Activated CD4-positive, alpha-beta memory T cell treated with anti-CD3 and anti-CD28 coated beads for 36 hours (primary cell): ENCODE measurements at regions of chr22 and their contacts with region 1.

Region 1: GRCh38 chr22:37443977-37444376 is 16.7 kb upstream of the ELFN2 start:
- DNase-seq: no peak
- H3K4me3 Mint-ChIP-seq: no peak overlapping the region
- H3K27ac Mint-ChIP-seq: peak overlapping the region; percentile 34
- H3K4me1 Mint-ChIP-seq: peaks cover 16% of the 10 kb centered on the region
- H3K27me3 Mint-ChIP-seq: peaks cover 2% of the 10 kb centered on the region

Region 2: DNA sequence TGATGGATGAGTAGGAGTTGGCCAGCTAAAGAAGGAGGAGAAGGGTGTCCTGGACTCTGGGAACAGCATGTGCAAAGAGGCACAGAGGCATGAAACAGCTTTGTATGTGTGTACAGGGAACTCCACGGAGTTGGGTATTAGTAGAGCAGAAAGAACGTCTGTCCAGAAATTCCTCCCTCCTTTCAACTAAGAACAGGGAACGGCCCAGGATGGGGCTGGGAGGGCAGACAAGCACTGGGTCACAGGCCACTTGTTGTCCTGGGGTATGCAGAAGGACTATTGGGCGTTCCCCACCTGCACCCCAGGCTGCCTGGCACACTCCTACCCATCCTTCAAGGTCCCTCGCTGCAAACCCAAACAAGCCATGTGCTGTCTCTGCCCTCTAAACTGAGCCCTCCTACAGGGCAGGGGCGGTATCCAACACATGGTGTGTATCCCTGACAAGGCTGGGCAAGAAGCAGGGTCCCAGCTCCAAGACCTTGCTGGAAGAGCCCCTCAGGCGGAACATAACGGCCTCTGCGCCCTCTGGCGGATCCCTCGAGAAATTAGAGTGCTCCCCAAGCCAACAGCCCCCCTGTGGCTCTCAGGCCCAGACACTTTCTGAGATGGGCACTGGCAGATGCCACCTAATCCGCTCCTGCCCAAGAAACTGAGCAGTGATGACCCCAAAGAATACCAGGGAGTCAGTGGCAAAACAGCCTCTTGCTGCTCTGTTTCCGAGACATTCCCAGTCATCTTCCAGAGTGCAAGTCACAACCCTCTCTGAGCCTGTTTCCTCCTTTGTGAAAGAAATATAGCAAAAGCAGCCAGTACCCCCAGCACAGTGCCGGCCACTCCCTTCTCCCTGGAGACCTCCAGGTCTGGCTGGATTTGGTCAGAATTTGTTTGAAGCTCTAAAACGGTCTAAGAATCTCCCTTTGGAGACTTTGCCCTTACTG is 15.1 kb before region 1 on chr22:
- CTCF ChIA-PET with region 1: interaction called, 6 read pairs
- POLR2A ChIA-PET with region 1: no interaction called
- intact Hi-C with region 1: loop called (anchors 1 kb)
- DNase-seq: peak; percentile 66
- H3K4me3 Mint-ChIP-seq: no peak overlapping the region
- H3K27ac Mint-ChIP-seq: no peak overlapping the region
- H3K4me1 Mint-ChIP-seq: peaks cover 27% of the 10 kb centered on the region
- H3K27me3 Mint-ChIP-seq: peaks cover 55% of the 10 kb centered on the region